Endothelial cell of umbilical vein (primary cell): ENCODE measurements at regions of chr6 and their contacts with region 1.

Region 1: GRCh38 chr6:31680840-31681671 is at the start of gene LY6G5C:
- DNase-seq: peak; percentile 81
- H3K4me3 ChIP-seq: peak within 1 kb of the TSS; percentile 18 to 59 (median 47)
- H3K27ac ChIP-seq: peak within 1 kb of the TSS; percentile 18
- H3K4me1 ChIP-seq: peaks cover 8% of the 10 kb centered on the region
- H3K27me3 ChIP-seq: no peaks in the 10 kb centered on the region
- CTCF ChIP-seq: peak; percentile 60 to 66
- POLR2A ChIP-seq: peak; percentile 68
- total RNA-seq, gene LY6G5C: 5.2 and 8.2 TPM in 2 replicates

Region 2: GRCh38 chr6:31665501-31666336 is 15.3 kb before region 1 on chr6 and contains the start of gene CSNK2B:
- CTCF ChIA-PET with region 1: interaction called, 3 read pairs
- POLR2A ChIA-PET with region 1: no interaction called
- dilution Hi-C with region 1: no loop called
- intact Hi-C with region 1: loop called (anchors 2 kb)
- DNase-seq: peak; percentile 97
- H3K4me3 ChIP-seq: peak within 1 kb of the TSS; percentile 70 to 94 (median 72)
- H3K27ac ChIP-seq: peak within 1 kb of the TSS; percentile 77
- H3K4me1 ChIP-seq: peaks cover 28% of the 10 kb centered on the region
- H3K27me3 ChIP-seq: no peaks in the 10 kb centered on the region
- CTCF ChIP-seq: peak in 1 of 2 donors; percentile 13
- POLR2A ChIP-seq: peak; percentile 54
- total RNA-seq, gene CSNK2B: 206 and 214 TPM in 2 replicates

Region 3: DNA sequence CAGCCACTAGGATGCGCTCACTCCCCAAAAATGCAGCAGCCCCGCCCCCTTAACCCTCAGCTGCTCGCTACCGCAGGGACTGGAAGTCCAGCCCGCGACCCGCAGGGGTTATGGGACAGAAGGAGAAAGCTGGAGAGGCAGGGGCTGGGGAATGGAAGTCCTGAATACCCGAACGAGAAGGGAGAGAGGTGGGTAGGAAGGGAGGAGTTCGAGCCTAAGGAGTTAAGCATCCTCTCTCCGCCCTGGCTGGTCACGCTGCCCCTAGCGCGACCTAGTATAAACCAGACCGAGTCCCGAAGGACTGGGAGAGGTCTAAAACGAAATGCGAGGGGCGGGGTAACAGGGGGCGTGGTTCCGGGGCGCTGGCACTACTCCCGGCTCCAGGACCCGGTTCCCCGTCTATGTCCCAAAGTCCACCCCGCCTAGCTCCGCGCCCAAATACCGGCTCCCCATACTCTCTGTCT is 48.5 kb after region 1 on chr6:
- CTCF ChIA-PET with region 1: interaction called, 4 read pairs
- POLR2A ChIA-PET with region 1: no interaction called
- dilution Hi-C with region 1: no loop called
- intact Hi-C with region 1: loop called (anchors 1 kb)
- DNase-seq: peak; percentile 90
- H3K4me3 ChIP-seq: peak overlapping the region; percentile 66 to 94 (median 70)
- H3K27ac ChIP-seq: peak overlapping the region; percentile 54
- H3K4me1 ChIP-seq: peaks cover 37% of the 10 kb centered on the region
- H3K27me3 ChIP-seq: no peaks in the 10 kb centered on the region
- CTCF ChIP-seq: peak in 1 of 2 donors; percentile 73
- POLR2A ChIP-seq: no peak

Region 4: DNA sequence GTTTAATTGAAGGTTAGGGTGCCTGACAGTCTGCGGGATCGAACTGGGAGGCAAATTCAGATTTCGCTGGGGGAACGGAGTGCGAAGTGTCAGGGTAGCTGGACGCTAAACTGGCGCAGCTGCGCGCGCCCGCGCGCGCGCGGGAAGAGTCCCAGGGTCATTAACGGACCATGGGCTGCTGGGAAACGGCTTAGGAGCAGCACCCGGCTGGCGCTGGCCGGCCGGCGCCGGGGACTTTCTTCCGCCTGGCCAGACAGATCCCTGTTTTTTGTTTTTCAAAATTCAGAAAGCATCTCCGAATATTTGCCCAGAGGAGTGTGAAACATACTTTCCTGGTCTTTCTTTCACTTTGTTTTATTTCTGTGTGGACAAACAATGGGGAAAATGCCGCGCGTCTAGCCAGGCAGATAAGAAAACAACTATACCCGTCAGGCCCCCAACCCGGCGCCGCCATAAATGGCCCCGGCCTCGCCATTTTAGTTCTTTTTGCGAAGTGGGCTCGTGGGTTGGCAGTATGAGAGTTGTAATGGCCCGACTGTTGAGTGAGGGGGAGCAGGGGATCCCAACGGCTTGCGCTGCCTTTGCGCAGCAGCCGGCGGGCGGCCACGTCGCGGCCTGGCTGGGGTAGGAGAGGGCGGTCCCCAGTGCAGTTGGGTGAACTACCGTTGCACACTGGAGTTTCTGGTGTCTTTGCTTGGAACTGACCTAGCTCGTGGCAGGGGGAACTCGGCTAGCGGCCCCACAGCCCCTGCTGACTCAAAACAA is 153.6 kb after region 1 on chr6:
- CTCF ChIA-PET with region 1: interaction called, 44 read pairs
- POLR2A ChIA-PET with region 1: interaction called, 7 read pairs
- dilution Hi-C with region 1: no loop called
- intact Hi-C with region 1: loop called (anchors 1 kb)
- DNase-seq: peak; percentile 83
- H3K4me3 ChIP-seq: peak overlapping the region; percentile 38 to 98 (median 81)
- H3K27ac ChIP-seq: peak overlapping the region; percentile 97
- H3K4me1 ChIP-seq: peaks cover 32% of the 10 kb centered on the region
- H3K27me3 ChIP-seq: no peaks in the 10 kb centered on the region
- CTCF ChIP-seq: no peak
- POLR2A ChIP-seq: peak; percentile 100

Region 5: GRCh38 chr6:31888276-31889258 is 207.5 kb after region 1 on chr6:
- CTCF ChIA-PET with region 1: no interaction called
- POLR2A ChIA-PET with region 1: no interaction called
- dilution Hi-C with region 1: no loop called
- intact Hi-C with region 1: loop called (anchors 2 kb)
- DNase-seq: no peak
- H3K4me3 ChIP-seq: no peak overlapping the region
- H3K27ac ChIP-seq: no peak overlapping the region
- H3K4me1 ChIP-seq: no peaks in the 10 kb centered on the region
- H3K27me3 ChIP-seq: no peaks in the 10 kb centered on the region
- CTCF ChIP-seq: peak; percentile 72 to 74
- POLR2A ChIP-seq: no peak

Region 6: DNA sequence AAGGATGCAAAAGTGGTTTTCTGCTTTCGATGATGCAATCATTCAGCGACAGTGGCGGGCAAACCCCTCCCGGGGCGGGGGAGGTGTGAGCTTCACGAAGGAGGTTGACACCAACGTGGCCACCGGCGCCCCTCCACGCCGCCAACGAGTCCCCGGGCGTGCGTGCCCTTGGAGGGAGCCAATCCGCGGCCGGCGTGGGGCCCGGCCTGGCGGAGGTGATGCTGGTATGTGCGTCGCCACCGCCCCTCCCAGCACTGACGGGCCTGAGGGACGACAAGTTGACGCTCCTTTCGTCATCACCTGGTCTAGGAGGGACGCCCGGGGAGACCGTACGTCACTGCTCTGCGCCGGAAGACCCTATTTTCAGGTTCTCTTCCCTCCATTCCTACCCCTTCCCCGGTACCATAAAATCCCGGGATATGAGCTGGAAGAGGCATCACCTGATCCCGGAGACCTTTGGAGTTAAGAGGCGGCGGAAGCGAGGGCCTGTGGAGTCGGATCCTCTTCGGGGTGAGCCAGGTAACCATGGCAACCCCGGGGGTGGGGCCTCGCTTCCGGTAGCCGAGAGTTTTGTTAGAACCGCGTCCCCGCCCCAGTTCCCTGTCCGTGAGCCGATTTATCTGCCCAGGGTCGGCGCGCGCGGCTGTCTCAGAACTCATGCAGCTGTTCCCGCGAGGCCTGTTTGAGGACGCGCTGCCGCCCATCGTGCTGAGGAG is 291.1 kb after region 1 on chr6 and contains the start of gene DXO:
- CTCF ChIA-PET with region 1: no interaction called
- POLR2A ChIA-PET with region 1: interaction called, 10 read pairs
- dilution Hi-C with region 1: no loop called
- intact Hi-C with region 1: no loop called
- DNase-seq: peak; percentile 98
- H3K4me3 ChIP-seq: peak within 1 kb of the TSS; percentile 51 to 73 (median 63)
- H3K27ac ChIP-seq: peak within 1 kb of the TSS; percentile 79
- H3K4me1 ChIP-seq: peaks cover 17% of the 10 kb centered on the region
- H3K27me3 ChIP-seq: no peaks in the 10 kb centered on the region
- CTCF ChIP-seq: no peak
- POLR2A ChIP-seq: no peak
- total RNA-seq, gene DXO: 18.0 and 20.7 TPM in 2 replicates